ENCODE measurements at regions of chrX and their contacts with region 1.

Region 1: DNA sequence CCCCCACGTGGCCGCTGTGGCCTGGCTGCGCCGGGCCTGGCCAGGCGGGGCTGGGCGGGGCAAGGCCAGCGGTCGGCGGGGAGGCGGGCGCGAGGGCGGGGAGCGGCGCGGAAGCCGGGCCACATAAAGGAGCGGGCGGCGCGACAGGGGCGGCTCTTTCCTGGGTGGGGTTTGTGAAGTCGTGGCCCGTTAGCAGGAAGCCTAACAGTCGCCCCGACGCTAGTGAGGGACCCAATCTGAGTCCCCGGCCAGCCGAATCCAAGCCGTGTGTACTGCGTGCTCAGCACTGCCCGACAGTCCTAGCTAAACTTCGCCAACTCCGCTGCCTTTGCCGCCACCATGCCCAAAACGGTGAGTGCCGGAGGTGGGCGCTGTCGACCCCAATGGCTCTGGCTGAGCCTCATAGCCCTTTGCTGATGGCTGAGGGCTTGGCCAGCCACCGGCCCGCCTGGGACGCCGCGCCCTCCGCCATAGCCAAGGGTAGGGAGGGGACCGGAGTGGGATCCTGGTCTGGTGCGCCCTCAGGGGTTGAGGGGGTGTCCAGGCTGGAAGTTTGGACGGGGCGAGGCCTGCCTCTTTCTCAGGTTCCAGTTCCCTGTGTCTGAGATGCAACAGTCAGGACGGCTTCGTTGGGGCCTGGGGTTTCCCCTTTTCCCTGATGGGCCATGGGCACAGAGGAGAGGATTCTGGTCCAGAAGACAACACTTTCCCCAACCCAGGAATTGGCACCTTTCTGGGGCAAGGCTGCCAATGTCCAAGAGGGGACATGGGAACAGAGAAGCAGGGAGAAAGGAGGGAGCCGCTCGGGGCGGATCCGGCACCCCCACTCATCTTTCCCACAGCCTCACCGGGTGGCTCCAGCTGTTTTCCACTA is at the start of gene MSN:
- DNase-seq: peak; percentile 87
- ATAC-seq: peak; percentile 67
- H3K4me3 Mint-ChIP-seq: peak within 1 kb of the TSS; percentile 91
- H3K27ac Mint-ChIP-seq: peak within 1 kb of the TSS; percentile 96
- H3K4me1 Mint-ChIP-seq: peaks cover 28% of the 10 kb centered on the region
- H3K27me3 Mint-ChIP-seq: no peaks in the 10 kb centered on the region
- total RNA-seq, gene MSN: 476 to 609 TPM

Region 2: GRCh38 chrX:65607070-65607742 is 60.5 kb before region 1 on chrX:
- CTCF ChIA-PET with region 1: interaction called, 4 read pairs
- POLR2A ChIA-PET with region 1: interaction called, 3 read pairs
- intact Hi-C with region 1: loop called in 1 of 2 experiments (anchors 2 kb)
- DNase-seq: peak; percentile 46
- ATAC-seq: peak; percentile 98
- H3K4me3 Mint-ChIP-seq: no peak overlapping the region
- H3K27ac Mint-ChIP-seq: peak overlapping the region; percentile 90
- H3K4me1 Mint-ChIP-seq: peaks cover 65% of the 10 kb centered on the region
- H3K27me3 Mint-ChIP-seq: no peaks in the 10 kb centered on the region

Region 3: DNA sequence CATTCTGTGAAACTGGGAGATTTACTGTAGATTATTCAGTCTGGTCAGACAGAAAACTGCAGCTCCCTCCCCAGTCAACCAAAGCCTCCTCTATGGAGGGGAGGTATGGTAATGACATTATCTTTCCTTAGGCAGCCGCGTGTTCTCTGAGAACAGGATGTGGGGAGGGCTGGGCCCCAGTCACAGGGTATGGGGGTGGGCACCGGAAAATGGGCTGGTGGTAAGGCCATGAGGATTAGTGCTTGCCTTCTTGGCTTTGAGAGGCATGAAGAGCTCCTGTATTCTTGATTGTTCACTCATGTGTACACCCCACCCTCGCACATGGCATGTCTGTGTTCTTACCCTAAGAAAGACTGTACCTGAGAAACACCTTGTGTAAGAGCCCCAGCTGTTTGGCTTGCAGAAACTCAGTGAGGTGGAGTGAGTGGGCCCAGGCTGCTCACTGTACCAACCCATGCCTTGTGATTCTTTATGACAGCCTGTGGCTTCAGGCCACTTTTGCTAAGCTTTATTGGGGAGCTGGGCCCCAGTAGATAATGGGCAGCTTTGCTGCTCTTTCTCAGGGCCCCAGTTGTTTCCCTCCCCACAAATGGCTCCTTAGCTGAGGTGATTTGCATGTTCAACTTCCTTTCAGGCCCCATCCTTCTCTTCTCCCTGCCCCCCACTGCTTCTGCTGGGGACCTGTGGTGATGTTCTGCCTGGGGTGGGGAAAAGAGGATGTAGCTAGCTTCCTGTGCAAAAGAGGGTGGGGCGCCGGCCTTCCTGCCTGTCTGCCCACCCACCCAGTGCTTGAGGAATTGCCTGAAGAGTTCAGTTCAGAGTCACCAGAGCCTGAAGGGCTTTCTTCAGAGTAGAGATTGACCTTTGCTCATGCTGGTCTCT is 30.4 kb after region 1 on chrX:
- CTCF ChIA-PET with region 1: interaction called, 3 read pairs
- POLR2A ChIA-PET with region 1: interaction called, 3 read pairs
- intact Hi-C with region 1: loop called in 1 of 2 experiments (anchors 1 kb)
- DNase-seq: peak; percentile 83
- ATAC-seq: peak; percentile 76
- H3K4me3 Mint-ChIP-seq: peak overlapping the region; percentile 48
- H3K27ac Mint-ChIP-seq: peak overlapping the region; percentile 98
- H3K4me1 Mint-ChIP-seq: peaks cover 87% of the 10 kb centered on the region
- H3K27me3 Mint-ChIP-seq: no peaks in the 10 kb centered on the region

Region 4: DNA sequence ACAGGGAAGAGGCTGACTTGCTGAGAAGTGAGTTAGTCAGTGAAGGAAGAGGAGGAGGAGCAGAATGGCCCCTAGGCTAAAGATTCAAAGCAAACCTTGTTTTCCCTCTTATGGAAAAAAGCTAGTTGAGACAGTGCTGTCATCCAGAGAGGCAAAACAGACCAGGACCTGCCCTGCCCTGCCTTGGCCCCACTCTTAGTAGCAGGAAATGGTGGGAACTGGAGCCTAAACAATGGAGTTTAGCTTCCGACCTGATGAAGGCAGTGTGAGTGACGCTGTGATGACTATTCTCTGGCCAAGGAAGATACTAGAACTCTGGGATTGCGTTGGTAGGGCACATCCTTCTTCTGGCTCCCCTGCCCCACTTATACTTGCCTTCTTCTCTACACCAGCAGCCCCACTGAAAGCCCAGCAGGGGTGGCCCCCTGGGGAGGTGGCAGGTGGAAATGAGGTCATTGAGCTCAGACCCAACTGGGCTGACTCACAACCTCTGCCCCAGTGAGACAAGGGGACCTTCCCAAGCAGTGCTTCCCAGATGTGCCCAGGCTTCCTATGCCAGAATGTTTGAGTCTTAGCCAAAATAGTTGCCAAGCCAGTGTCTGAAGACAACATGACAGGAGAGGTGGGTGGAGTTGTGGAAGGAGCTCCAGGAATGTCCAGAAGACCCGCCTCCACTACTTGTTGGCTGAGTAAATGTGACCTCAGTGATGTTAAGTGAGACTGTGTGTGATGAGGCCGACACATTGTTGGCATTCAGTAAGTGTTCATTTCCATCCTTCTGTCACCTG is 38.5 kb after region 1 on chrX:
- CTCF ChIA-PET with region 1: interaction called, 4 read pairs
- POLR2A ChIA-PET with region 1: interaction called, 6 read pairs
- intact Hi-C with region 1: loop called (anchors 1 to 2 kb)
- DNase-seq: peak; percentile 81
- ATAC-seq: peak; percentile 86
- H3K4me3 Mint-ChIP-seq: peak overlapping the region; percentile 44
- H3K27ac Mint-ChIP-seq: peak overlapping the region; percentile 91
- H3K4me1 Mint-ChIP-seq: peaks cover 68% of the 10 kb centered on the region
- H3K27me3 Mint-ChIP-seq: no peaks in the 10 kb centered on the region

Region 5: GRCh38 chrX:66399273-66399672 is 731.5 kb after region 1 on chrX:
- CTCF ChIA-PET with region 1: no interaction called
- POLR2A ChIA-PET with region 1: no interaction called
- intact Hi-C with region 1: no loop called
- DNase-seq: no peak
- ATAC-seq: no peak
- H3K4me3 Mint-ChIP-seq: no peak overlapping the region
- H3K27ac Mint-ChIP-seq: no peak overlapping the region
- H3K4me1 Mint-ChIP-seq: no peaks in the 10 kb centered on the region
- H3K27me3 Mint-ChIP-seq: no peaks in the 10 kb centered on the region

Measured in activated CD4-positive, alpha-beta T cell treated with anti-CD3 and anti-CD28 coated beads for 36 hours (primary cell).